ENCODE measurements at regions of chr16 and their contacts with region 1.

Region 1: GRCh38 chr16:19555162-19555937 is at the start of gene VPS35L:
- DNase-seq: peak; percentile 97
- H3K4me3 Mint-ChIP-seq: peak within 1 kb of the TSS; percentile 85
- H3K27ac Mint-ChIP-seq: peak within 1 kb of the TSS; percentile 86
- H3K4me1 Mint-ChIP-seq: peaks cover 16% of the 10 kb centered on the region
- H3K27me3 Mint-ChIP-seq: no peaks in the 10 kb centered on the region
- total RNA-seq, gene VPS35L: 33.9 to 38.0 TPM

Region 2: DNA sequence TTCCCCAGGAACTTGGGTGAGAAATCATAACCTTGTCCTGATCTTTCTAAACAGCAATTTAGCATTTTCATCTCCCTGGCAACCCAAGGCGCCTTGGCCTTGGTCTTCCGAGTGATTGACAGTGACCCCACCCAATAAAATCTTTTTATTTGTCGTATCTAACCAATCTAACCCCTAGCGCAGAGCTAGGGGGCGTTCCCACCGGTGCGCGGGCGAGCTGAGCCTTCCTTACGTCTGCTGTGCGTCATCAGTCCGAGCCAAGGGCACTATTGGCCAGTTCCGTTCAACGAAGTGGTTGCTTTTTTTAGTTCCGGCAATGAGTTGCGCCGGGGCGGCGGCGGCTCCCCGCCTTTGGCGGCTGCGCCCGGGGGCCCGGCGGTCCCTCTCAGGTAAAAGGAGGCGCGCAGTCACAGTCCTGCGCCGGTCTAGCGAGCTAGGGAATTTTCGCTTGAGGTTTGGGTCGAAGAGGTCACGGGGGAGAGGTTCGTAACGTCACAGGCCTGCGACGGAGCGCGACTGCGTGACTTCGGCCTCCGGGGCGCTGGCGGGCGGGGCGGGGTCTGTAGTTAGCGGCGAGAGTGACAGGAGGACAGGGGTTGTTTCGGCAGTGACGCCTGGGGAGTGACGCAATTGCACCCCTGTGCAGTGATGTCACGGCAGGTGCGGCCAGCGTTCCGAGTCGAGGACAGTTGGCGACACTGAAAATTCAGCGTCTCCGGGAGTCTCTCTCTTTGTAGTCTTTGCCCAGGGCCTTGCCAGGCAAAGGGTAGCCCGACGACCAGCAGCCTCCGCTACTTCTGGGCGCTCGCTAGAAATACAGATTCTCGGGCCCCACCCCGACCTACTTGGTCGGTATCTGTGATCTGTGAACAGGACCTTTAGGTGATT is 487.8 kb before region 1 on chr16 and contains the start of gene COQ7:
- CTCF ChIA-PET with region 1: interaction called, 4 read pairs
- POLR2A ChIA-PET with region 1: no interaction called
- intact Hi-C with region 1: loop called (anchors 2 kb)
- DNase-seq: peak; percentile 99
- H3K4me3 Mint-ChIP-seq: peak within 1 kb of the TSS; percentile 91
- H3K27ac Mint-ChIP-seq: peak within 1 kb of the TSS; percentile 93
- H3K4me1 Mint-ChIP-seq: peaks cover 7% of the 10 kb centered on the region
- H3K27me3 Mint-ChIP-seq: no peaks in the 10 kb centered on the region
- total RNA-seq, gene COQ7: 14.1 to 15.2 TPM

Region 3: GRCh38 chr16:19521471-19522396 is 33.6 kb before region 1 on chr16 and contains the start of gene GDE1:
- CTCF ChIA-PET with region 1: interaction called, 35 read pairs
- POLR2A ChIA-PET with region 1: interaction called, 33 read pairs
- intact Hi-C with region 1: loop called (anchors 1 kb)
- DNase-seq: peak; percentile 96
- H3K4me3 Mint-ChIP-seq: peak within 1 kb of the TSS; percentile 90
- H3K27ac Mint-ChIP-seq: peak within 1 kb of the TSS; percentile 75
- H3K4me1 Mint-ChIP-seq: peaks cover 48% of the 10 kb centered on the region
- H3K27me3 Mint-ChIP-seq: no peaks in the 10 kb centered on the region
- total RNA-seq, gene GDE1: 18.4 to 19.0 TPM

Region 4: GRCh38 chr16:19601083-19601976 is 46.0 kb after region 1 on chr16:
- CTCF ChIA-PET with region 1: interaction called, 11 read pairs
- POLR2A ChIA-PET with region 1: no interaction called
- intact Hi-C with region 1: no loop called
- DNase-seq: peak; percentile 25
- H3K4me3 Mint-ChIP-seq: no peak overlapping the region
- H3K27ac Mint-ChIP-seq: no peak overlapping the region
- H3K4me1 Mint-ChIP-seq: peaks cover 1% of the 10 kb centered on the region
- H3K27me3 Mint-ChIP-seq: no peaks in the 10 kb centered on the region

Region 5: GRCh38 chr16:19632916-19633315 is 77.6 kb after region 1 on chr16:
- CTCF ChIA-PET with region 1: no interaction called
- POLR2A ChIA-PET with region 1: no interaction called
- intact Hi-C with region 1: no loop called
- DNase-seq: no peak
- H3K4me3 Mint-ChIP-seq: no peak overlapping the region
- H3K27ac Mint-ChIP-seq: no peak overlapping the region
- H3K4me1 Mint-ChIP-seq: no peaks in the 10 kb centered on the region
- H3K27me3 Mint-ChIP-seq: no peaks in the 10 kb centered on the region

Region 6: GRCh38 chr16:19645557-19645981 is 90.2 kb after region 1 on chr16:
- CTCF ChIA-PET with region 1: no interaction called
- POLR2A ChIA-PET with region 1: no interaction called
- intact Hi-C with region 1: no loop called
- DNase-seq: no peak
- H3K4me3 Mint-ChIP-seq: no peak overlapping the region
- H3K27ac Mint-ChIP-seq: no peak overlapping the region
- H3K4me1 Mint-ChIP-seq: peaks cover 2% of the 10 kb centered on the region
- H3K27me3 Mint-ChIP-seq: no peaks in the 10 kb centered on the region

Region 7: DNA sequence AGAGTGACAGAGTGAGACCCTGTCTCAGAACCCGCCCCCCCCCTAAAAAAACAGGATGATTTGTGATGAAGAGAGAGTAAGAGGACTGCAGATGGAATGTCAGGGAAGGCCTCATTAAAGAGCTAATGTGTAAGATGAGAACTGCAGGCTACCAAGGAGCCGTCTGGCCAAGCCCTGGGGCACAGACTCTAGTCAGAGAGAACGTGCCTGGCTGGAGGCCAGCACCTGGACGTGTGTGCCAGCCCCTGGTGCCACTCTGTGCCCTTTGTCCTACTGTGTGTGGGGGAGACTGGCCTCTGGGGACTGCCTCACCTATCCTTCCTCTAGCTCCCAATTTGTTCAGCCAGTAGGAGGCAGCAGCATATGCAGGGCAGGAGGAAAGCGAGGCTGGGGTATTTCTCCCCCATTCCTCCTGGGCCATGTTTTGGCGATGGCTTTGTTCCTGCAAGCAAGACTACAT is 125.6 kb after region 1 on chr16:
- CTCF ChIA-PET with region 1: no interaction called
- POLR2A ChIA-PET with region 1: no interaction called
- intact Hi-C with region 1: no loop called
- DNase-seq: no peak
- H3K4me3 Mint-ChIP-seq: no peak overlapping the region
- H3K27ac Mint-ChIP-seq: no peak overlapping the region
- H3K4me1 Mint-ChIP-seq: no peaks in the 10 kb centered on the region
- H3K27me3 Mint-ChIP-seq: no peaks in the 10 kb centered on the region

Region 8: DNA sequence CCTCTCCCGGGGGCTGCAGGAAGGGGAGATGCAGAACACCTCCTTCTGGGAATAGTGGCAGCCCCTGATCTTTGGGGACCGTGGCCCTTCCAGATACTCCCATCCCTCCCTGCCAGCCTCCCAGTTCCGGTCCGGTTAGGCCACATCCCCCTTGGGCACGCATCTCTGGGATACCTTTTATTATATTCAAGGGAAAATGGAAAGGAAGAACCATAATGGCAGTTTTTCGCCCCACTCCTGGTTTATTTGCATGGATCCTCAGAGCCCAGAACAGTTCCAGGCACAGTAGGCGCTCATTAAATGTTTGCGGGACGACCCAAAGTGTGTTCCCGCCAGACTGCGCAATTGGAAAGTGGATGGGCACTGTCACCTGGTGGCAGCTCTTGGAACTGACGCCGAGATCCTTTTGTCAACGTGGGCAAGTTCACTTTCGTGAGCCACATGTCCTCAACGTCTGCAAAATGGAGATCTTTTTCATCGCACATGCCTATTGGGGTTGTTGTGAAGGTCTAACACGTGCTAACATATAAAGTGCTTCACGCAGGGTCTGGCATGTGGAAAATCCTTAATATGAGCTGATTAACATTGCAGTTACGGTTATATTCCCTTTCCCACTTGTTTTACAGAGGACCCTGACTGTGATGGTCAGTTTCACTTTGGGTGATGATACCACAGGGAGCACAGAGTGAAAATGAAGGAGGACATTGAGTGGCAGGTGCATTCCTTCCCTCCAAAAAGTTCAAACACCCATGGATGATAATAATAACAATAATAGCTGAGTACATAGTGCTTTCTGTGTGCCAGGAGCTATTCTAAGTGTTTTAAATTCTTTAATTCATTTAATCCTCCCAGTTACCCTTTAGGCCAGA is 331.0 kb after region 1 on chr16:
- CTCF ChIA-PET with region 1: interaction called, 11 read pairs
- POLR2A ChIA-PET with region 1: interaction called, 4 read pairs
- intact Hi-C with region 1: loop called (anchors 1 kb)
- DNase-seq: peak; percentile 89
- H3K4me3 Mint-ChIP-seq: peak overlapping the region; percentile 57
- H3K27ac Mint-ChIP-seq: no peak overlapping the region
- H3K4me1 Mint-ChIP-seq: peaks cover 19% of the 10 kb centered on the region
- H3K27me3 Mint-ChIP-seq: peaks cover 32% of the 10 kb centered on the region